BJ (cell line): ENCODE measurements at regions of chr1 and their contacts with region 1.

Region 1: DNA sequence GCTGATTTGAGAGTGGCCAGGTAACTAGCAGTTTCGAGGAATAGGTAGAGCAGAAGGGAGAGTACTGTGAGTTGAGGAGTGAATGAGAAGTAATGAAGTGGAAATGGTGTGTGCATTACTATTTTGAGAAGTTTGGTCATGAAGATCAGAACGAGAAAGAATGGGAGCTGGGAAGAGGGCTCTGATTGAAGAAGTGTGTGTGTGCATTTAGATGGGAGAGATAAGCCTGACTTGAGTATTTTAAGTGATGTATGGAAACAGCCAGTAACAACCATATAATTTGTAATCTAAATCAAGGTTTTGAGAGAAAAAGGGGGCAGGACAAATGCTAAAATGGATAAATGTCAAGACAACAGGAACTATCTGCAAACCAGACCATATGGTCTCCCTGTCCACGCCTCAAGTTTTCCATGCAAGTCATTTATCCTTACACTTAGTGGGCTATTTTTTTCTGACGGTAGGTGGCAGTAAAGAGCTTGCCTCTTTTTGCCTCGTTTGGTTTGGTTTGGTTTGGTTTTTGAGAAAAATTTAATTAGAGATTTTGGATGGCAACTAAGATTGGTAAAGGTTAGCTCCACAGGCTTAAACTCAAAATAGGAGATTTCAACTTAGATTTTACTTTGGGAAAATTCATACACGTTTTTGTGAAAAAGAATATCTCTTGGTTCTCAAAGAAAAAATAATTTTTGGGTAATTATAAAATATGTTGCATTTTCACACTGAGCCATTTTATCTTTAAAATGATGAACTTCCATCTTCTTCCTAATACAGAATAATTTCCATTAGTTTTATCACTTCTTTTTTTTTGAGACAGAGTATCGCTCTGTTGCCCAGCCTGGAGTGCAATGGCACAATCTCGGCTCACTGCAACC is 9.5 kb upstream of the B3GALNT2 start:
- DNase-seq: no peak
- H3K4me3 ChIP-seq: no peak overlapping the region
- H3K27me3 ChIP-seq: no peaks in the 10 kb centered on the region
- CTCF ChIP-seq: peak; percentile 88

Region 2: GRCh38 chr1:235783148-235783776 is 269.5 kb after region 1 on chr1:
- CTCF ChIA-PET with region 1: interaction called, 41 read pairs
- POLR2A ChIA-PET with region 1: no interaction called
- DNase-seq: peak; percentile 24
- H3K4me3 ChIP-seq: no peak overlapping the region
- H3K27me3 ChIP-seq: no peaks in the 10 kb centered on the region
- CTCF ChIP-seq: peak; percentile 38